Naive thymus-derived CD4-positive, alpha-beta T cell (primary cell): ENCODE measurements at regions of chr19 and their contacts with region 1.

Region 1: GRCh38 chr19:2782936-2783780 is at the start of gene SGTA:
- DNase-seq: peak; percentile 82 to 97 (median 95)
- ATAC-seq: peak; percentile 73
- H3K4me3 ChIP-seq: peak within 1 kb of the TSS; percentile 90
- H3K4me3 Mint-ChIP-seq: peak within 1 kb of the TSS; percentile 83 to 98 (median 88)
- H3K27ac ChIP-seq: peak within 1 kb of the TSS; percentile 95
- H3K27ac Mint-ChIP-seq: peak within 1 kb of the TSS; percentile 78 to 97 (median 92)
- H3K4me1 ChIP-seq: peaks cover 33 to 35% of the 10 kb centered on the region in 2 donors
- H3K4me1 Mint-ChIP-seq: peaks cover 29 to 64% (median 51%) of the 10 kb centered on the region in 7 donors
- H3K27me3 ChIP-seq: no peaks in the 10 kb centered on the region
- H3K27me3 Mint-ChIP-seq: no peaks in the 10 kb centered on the region
- total RNA-seq, gene SGTA: 32.2 to 47.8 (median 37.9) TPM

Region 2: GRCh38 chr19:2702162-2703076 is 80.7 kb before region 1 on chr19 and contains the start of gene GNG7:
- CTCF ChIA-PET with region 1: no interaction called
- POLR2A ChIA-PET with region 1: no interaction called
- intact Hi-C with region 1: loop called in 1 of 2 experiments (anchors 1 kb)
- DNase-seq: peak; percentile 92 to 98 (median 96)
- ATAC-seq: peak; percentile 100
- H3K4me3 ChIP-seq: peak within 1 kb of the TSS; percentile 39
- H3K4me3 Mint-ChIP-seq: peak within 1 kb of the TSS; percentile 69 to 87 (median 78)
- H3K27ac ChIP-seq: peak within 1 kb of the TSS; percentile 67
- H3K27ac Mint-ChIP-seq: peak within 1 kb of the TSS; percentile 23 to 90 (median 72)
- H3K4me1 ChIP-seq: peaks cover 0 to 16% of the 10 kb centered on the region in 2 donors
- H3K4me1 Mint-ChIP-seq: peaks cover 6 to 41% (median 39%) of the 10 kb centered on the region in 7 donors
- H3K27me3 ChIP-seq: no peaks in the 10 kb centered on the region
- H3K27me3 Mint-ChIP-seq: peaks cover 0 to 12% (median 0%) of the 10 kb centered on the region in 5 donors
- total RNA-seq, gene GNG7: 0.31 to 6.8 (median 6.6) TPM

Region 3: DNA sequence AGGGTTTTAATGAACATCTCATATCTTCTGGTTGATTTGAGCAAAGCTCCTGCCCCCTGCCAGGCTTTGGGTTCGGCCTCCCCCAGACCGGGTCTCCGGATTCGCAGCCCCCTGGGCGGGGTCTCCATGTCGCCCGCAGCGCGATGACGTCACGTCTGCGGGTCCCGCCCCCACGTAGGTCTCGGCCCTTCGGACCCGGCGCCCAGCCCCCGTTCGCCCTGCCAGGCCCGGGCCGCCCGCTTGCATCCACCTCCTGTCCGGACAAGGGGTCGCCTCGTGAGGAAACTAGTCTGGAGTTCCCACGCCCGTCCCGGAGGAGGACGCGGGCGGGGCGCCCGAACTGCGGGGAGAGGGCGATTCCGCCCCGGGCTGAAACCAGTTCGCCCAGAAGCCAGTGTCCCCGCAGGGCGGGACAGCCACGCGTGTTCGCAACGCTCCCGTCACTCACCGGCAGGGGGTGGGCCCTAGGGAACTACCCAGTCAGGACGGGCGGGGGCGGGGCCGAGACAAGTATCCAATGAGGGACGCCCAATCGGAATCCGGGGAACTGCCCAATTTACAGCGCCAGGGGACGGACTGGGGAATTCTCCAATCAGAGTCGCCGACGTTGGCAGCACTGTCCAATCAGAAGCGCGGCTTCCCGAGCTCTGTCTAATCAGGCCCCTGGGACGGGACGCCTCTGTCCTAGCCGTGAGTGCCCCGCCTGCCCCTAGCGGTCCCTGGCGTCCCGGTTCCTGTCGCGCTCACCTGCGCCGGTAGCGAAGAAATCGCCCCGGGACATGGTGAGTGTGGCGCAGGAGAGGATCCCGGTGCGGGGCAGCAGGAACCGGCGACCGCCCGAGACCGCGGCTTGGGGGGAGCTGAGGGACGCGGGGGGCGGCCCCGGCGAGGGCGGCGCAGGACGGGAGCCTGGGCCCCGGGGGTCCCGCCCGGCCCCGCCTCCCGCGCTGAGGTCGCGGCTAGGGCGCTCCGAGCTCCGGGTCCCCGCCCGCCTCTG is 57.9 kb after region 1 on chr19 and contains the start of gene ZNF555:
- CTCF ChIA-PET with region 1: no interaction called
- POLR2A ChIA-PET with region 1: interaction called, 4 read pairs
- intact Hi-C with region 1: loop called in 1 of 2 experiments (anchors 1 kb)
- DNase-seq: peak; percentile 77 to 99 (median 97)
- ATAC-seq: peak; percentile 98
- H3K4me3 ChIP-seq: peak within 1 kb of the TSS; percentile 94
- H3K4me3 Mint-ChIP-seq: peak within 1 kb of the TSS; percentile 85 to 96 (median 92)
- H3K27ac ChIP-seq: peak within 1 kb of the TSS; percentile 75
- H3K27ac Mint-ChIP-seq: peak within 1 kb of the TSS; percentile 70 to 90 (median 82)
- H3K4me1 ChIP-seq: peaks cover 3 to 13% of the 10 kb centered on the region in 2 donors
- H3K4me1 Mint-ChIP-seq: peaks cover 5 to 33% (median 18%) of the 10 kb centered on the region in 7 donors
- H3K27me3 ChIP-seq: no peaks in the 10 kb centered on the region
- H3K27me3 Mint-ChIP-seq: peaks cover 0 to 7% (median 0%) of the 10 kb centered on the region in 5 donors
- total RNA-seq, gene ZNF555: 1.2 to 10.0 (median 2.7) TPM

Region 4: DNA sequence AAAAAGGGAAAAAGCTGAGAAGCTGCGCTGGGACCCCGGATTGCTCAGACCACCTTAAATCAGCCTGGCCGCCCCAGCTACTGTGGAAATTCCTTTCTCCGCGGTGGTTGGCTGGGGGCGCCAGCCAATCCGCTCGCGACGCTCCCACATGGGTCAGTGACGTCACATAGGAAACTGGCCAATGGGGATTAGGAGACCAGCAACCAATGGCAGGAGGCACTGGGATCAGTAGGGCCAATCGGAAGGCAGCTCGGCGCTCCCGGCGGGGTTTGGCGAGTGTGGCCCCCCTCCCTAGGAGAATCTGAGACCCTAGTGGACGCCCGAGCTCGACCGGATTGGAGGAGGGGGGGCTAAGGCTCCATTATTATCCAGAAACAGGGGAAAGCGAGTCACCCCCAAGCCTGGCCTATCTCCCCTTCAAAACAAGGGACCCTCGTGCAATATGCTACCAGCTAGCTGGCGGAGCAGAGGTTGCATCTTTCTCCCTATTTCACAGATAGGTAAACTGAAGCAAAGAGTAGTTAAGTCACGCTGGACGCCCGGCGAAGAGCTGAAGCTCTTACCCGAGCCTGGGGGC is 252.5 kb after region 1 on chr19:
- CTCF ChIA-PET with region 1: no interaction called
- POLR2A ChIA-PET with region 1: no interaction called
- intact Hi-C with region 1: loop called in 1 of 2 experiments (anchors 1 kb)
- DNase-seq: peak; percentile 77 to 97 (median 95)
- ATAC-seq: peak; percentile 95
- H3K4me3 ChIP-seq: peak overlapping the region; percentile 95
- H3K4me3 Mint-ChIP-seq: peak overlapping the region; percentile 88 to 97 (median 94)
- H3K27ac ChIP-seq: peak overlapping the region; percentile 76
- H3K27ac Mint-ChIP-seq: peak overlapping the region; percentile 92 to 99 (median 98)
- H3K4me1 ChIP-seq: peaks cover 11 to 16% of the 10 kb centered on the region in 2 donors
- H3K4me1 Mint-ChIP-seq: peaks cover 21 to 44% (median 31%) of the 10 kb centered on the region in 7 donors
- H3K27me3 ChIP-seq: no peaks in the 10 kb centered on the region
- H3K27me3 Mint-ChIP-seq: peaks cover 0 to 41% (median 0%) of the 10 kb centered on the region in 5 donors

Region 5: DNA sequence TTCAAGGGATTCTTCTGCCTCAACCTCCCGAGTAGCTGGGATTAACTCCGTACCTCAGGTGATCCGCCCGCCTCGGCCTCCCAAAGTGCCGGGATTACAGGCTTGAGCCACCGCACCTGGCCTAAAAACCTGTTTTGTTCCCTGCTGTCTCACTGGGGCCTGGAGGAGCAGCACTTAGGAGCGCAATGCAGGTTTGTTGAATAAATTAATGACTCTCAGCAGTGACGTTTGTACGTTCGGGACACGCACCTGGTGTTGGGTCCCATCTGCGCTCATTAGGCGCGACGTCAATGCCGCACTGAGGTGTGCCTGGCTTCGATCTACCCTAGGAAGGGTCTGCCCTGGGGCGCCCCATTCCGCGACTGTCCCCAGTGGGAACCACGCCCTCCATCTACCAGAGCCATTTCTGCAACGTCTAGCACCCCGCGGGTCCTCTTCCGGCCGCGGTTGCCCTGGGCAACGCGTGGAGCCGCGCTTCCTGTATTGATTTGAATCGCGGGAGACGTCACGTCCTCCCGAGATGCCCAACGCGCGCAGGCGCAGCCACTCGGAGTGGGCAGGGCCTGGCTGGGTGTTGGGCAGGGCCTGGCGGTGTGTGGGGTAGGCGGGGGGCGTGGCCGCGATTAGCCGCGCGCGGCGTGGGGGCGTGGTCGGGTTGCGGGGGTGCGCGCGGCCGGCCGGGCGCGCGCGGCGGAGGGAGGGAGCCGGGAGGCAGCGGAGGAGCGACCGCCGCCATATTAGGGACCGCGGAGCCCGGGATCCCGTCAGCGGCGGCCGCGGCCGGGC is 722.6 kb after region 1 on chr19 and contains the start of gene FZR1:
- CTCF ChIA-PET with region 1: no interaction called
- POLR2A ChIA-PET with region 1: no interaction called
- intact Hi-C with region 1: loop called in 1 of 2 experiments (anchors 10 kb)
- DNase-seq: peak; percentile 98 to 100 (median 100)
- ATAC-seq: peak; percentile 96
- H3K4me3 ChIP-seq: peak within 1 kb of the TSS; percentile 97
- H3K4me3 Mint-ChIP-seq: peak within 1 kb of the TSS; percentile 88 to 98 (median 92)
- H3K27ac ChIP-seq: peak within 1 kb of the TSS; percentile 95
- H3K27ac Mint-ChIP-seq: peak within 1 kb of the TSS; percentile 91 to 98 (median 96)
- H3K4me1 ChIP-seq: peaks cover 14 to 23% of the 10 kb centered on the region in 2 donors
- H3K4me1 Mint-ChIP-seq: peaks cover 29 to 57% (median 44%) of the 10 kb centered on the region in 7 donors
- H3K27me3 ChIP-seq: no peaks in the 10 kb centered on the region
- H3K27me3 Mint-ChIP-seq: peaks cover 0 to 3% (median 0%) of the 10 kb centered on the region in 5 donors
- total RNA-seq, gene FZR1: 60.7 to 90.7 (median 71.3) TPM